ENCODE measurements at regions of chr7 and their contacts with region 1.

Region 1: GRCh38 chr7:68914006-68914405 is 684.3 kb upstream of the AUTS2 start:
- DNase-seq: no peak

Region 2: GRCh38 chr7:68929781-68930261 is 15.8 kb after region 1 on chr7:
- CTCF ChIA-PET with region 1: interaction called, 10 read pairs
- POLR2A ChIA-PET with region 1: no interaction called
- DNase-seq: no peak

Region 3: GRCh38 chr7:69091521-69091920 is 177.5 kb after region 1 on chr7:
- CTCF ChIA-PET with region 1: no interaction called
- POLR2A ChIA-PET with region 1: no interaction called
- DNase-seq: no peak

Measured in HEK293T (cell line).